WTC11 (cell line): ENCODE measurements at regions of chr7 and their contacts with region 1.

Region 1: GRCh38 chr7:106176414-106177299 is 64.5 kb upstream of the SYPL1 start:
- DNase-seq: peak; percentile 94
- ATAC-seq: peak; percentile 94
- H3K4me3 Mint-ChIP-seq: peak overlapping the region; percentile 35; the same call in 1 of the 2 replicates
- H3K27ac Mint-ChIP-seq: no peak overlapping the region
- H3K4me1 Mint-ChIP-seq: peaks cover 32% of the 10 kb centered on the region
- H3K27me3 Mint-ChIP-seq: no peaks in the 10 kb centered on the region
- CTCF ChIP-seq: peak; percentile 74

Region 2: GRCh38 chr7:106041140-106041717 is 135.4 kb before region 1 on chr7:
- CTCF ChIA-PET with region 1: no interaction called
- POLR2A ChIA-PET with region 1: no interaction called
- DNase-seq: peak; percentile 72
- ATAC-seq: peak; percentile 71
- H3K4me3 Mint-ChIP-seq: no peak overlapping the region
- H3K27ac Mint-ChIP-seq: no peak overlapping the region
- H3K4me1 Mint-ChIP-seq: peaks cover 23% of the 10 kb centered on the region
- H3K27me3 Mint-ChIP-seq: no peaks in the 10 kb centered on the region; the same call in 1 of the 2 replicates
- CTCF ChIP-seq: peak; percentile 97

Region 3: DNA sequence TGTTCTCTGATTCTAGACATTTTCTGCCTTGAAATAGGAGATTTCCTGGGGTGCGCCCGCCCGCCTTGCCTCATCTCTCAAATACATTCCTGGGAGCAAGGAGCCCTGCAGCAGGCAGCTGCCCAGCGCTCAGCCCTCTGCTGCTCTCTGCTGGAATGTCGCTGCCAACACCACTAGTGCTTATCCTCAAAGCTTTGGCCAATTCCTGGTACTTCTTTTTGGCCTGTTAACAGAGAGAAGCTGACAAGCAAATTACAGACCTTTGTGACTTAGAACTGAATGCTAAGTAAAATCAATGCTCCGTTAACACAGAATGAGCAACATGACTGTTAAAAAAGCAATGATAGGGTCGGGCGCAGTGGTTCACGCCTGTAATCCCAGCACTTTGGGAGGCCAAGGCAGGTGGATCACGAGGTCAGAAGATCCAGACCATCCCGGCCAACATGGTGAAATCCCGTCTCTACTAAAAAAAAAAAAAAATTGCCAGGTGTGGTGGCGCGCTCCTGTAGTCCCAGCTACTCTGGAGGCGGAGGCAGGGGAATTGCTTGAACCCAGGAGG is 22.7 kb before region 1 on chr7:
- CTCF ChIA-PET with region 1: interaction called, 15 read pairs
- POLR2A ChIA-PET with region 1: no interaction called
- DNase-seq: peak; percentile 90
- ATAC-seq: peak; percentile 99
- H3K4me3 Mint-ChIP-seq: no peak overlapping the region
- H3K27ac Mint-ChIP-seq: no peak overlapping the region
- H3K4me1 Mint-ChIP-seq: peaks cover 9% of the 10 kb centered on the region
- H3K27me3 Mint-ChIP-seq: no peaks in the 10 kb centered on the region; the same call in 1 of the 2 replicates
- CTCF ChIP-seq: peak; percentile 64

Region 4: DNA sequence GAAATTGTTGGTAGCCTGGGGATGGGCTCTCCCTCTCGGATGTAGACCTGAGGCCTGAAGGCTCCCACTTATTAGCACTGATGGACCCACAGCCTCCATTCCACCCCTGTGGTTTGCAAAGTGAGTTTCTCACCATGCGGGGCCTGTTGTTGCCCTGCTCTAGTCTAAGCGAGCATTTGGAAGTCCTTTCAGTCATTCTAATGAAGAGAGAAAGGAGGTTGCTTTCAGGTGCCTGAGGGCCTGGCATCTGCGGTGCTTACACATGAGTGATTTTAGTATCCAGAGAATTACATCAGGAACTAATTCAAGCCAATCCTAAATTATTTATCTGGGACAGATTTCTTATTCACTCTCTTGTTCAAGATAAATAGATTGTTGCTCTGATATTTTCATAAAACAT is 46.5 kb after region 1 on chr7:
- CTCF ChIA-PET with region 1: interaction called, 22 read pairs
- POLR2A ChIA-PET with region 1: no interaction called
- DNase-seq: no peak
- ATAC-seq: peak; percentile 81
- H3K4me3 Mint-ChIP-seq: no peak overlapping the region
- H3K27ac Mint-ChIP-seq: 0 out of 2 replicates have a peak overlapping the region, but pooled peaks have one; percentile 30
- H3K4me1 Mint-ChIP-seq: peaks cover 23% of the 10 kb centered on the region
- H3K27me3 Mint-ChIP-seq: peaks cover 3% of the 10 kb centered on the region; the same call in 1 of the 2 replicates
- CTCF ChIP-seq: no peak

Region 5: DNA sequence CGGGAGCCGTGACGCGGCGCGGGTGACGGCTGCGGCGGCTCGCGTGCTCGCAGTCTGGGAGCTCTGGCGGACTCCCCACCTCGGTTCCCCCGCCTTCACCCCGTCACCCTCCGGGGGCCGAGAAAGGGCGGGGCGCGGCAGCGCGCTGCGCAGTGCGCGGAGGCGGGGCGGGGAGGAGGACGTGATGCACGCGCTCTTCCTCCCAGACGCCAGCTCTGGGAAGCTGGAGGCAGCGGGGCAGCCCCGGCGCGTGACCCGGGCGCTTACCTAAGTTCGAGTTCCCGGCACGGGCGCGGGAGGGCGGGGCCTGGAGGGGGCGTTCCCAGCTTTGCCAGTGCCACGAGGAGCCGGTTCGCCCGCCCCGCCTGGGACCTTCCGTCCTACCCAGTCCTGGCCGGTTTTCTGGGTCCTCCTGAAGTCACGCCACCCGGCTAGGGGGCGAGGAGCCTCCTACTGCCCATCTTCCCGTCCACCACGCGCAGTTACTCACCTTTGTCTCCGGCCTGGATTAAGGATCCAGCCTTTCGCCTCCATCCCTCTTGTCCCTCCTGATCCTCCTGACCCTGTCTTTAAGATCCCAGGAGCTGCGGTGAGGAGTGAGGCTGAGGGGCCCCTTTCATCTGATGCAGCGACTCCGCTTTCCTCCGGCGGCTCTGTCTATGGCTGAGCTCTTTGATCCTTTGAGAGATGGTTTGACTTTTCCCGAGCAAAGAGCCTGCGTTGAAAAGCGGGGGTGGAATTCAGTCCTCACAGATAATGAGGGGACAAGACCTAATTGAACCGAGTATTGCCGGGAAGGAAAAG is 108.6 kb after region 1 on chr7:
- CTCF ChIA-PET with region 1: interaction called, 20 read pairs
- POLR2A ChIA-PET with region 1: interaction called, 5 read pairs
- DNase-seq: peak; percentile 99
- ATAC-seq: peak; percentile 88
- H3K4me3 Mint-ChIP-seq: peak overlapping the region; percentile 93
- H3K27ac Mint-ChIP-seq: peak overlapping the region; percentile 100
- H3K4me1 Mint-ChIP-seq: peaks cover 38% of the 10 kb centered on the region
- H3K27me3 Mint-ChIP-seq: no peaks in the 10 kb centered on the region; the same call in 1 of the 2 replicates
- CTCF ChIP-seq: no peak

Region 6: GRCh38 chr7:106461993-106462859 is 285.6 kb after region 1 on chr7:
- CTCF ChIA-PET with region 1: interaction called, 27 read pairs
- POLR2A ChIA-PET with region 1: interaction called, 3 read pairs
- DNase-seq: no peak
- ATAC-seq: no peak
- H3K4me3 Mint-ChIP-seq: no peak overlapping the region
- H3K27ac Mint-ChIP-seq: no peak overlapping the region
- H3K4me1 Mint-ChIP-seq: peaks cover 38% of the 10 kb centered on the region
- H3K27me3 Mint-ChIP-seq: peaks cover 3% of the 10 kb centered on the region; the same call in 1 of the 2 replicates
- CTCF ChIP-seq: no peak

Region 7: GRCh38 chr7:106659963-106660861 is 483.6 kb after region 1 on chr7:
- CTCF ChIA-PET with region 1: interaction called, 22 read pairs
- POLR2A ChIA-PET with region 1: interaction called, 4 read pairs
- DNase-seq: peak; percentile 91
- ATAC-seq: peak; percentile 76
- H3K4me3 Mint-ChIP-seq: peak overlapping the region; percentile 86
- H3K27ac Mint-ChIP-seq: no peak overlapping the region
- H3K4me1 Mint-ChIP-seq: peaks cover 16% of the 10 kb centered on the region
- H3K27me3 Mint-ChIP-seq: no peaks in the 10 kb centered on the region
- CTCF ChIP-seq: no peak; the same call in 1 of the 2 replicates

Region 8: DNA sequence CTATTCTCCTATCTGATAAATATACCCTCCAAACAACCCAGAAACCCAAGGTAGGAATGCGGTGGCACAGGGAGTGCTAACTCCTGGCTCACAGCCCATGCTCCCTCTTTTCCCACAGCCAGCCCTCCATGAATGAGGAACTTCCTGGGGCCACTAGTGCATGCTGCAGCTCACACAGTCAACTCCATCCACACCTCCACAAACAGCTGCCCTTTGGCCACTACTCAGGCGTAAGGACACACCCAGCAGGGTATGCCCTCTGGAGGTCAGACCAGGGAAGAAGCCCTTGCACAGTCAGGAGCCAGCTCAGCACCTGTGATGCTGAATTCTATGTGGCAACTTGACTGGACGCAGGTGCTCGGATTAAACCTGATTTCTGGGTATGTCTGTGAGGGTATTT is 603.2 kb after region 1 on chr7:
- CTCF ChIA-PET with region 1: interaction called, 12 read pairs
- POLR2A ChIA-PET with region 1: no interaction called
- DNase-seq: peak; percentile 64
- ATAC-seq: peak; percentile 100
- H3K4me3 Mint-ChIP-seq: no peak overlapping the region
- H3K27ac Mint-ChIP-seq: no peak overlapping the region
- H3K4me1 Mint-ChIP-seq: peaks cover 9% of the 10 kb centered on the region; the same call in 1 of the 2 replicates
- H3K27me3 Mint-ChIP-seq: no peaks in the 10 kb centered on the region
- CTCF ChIP-seq: no peak